ENCODE measurements at regions of chr4 and their contacts with region 1.

Region 1: DNA sequence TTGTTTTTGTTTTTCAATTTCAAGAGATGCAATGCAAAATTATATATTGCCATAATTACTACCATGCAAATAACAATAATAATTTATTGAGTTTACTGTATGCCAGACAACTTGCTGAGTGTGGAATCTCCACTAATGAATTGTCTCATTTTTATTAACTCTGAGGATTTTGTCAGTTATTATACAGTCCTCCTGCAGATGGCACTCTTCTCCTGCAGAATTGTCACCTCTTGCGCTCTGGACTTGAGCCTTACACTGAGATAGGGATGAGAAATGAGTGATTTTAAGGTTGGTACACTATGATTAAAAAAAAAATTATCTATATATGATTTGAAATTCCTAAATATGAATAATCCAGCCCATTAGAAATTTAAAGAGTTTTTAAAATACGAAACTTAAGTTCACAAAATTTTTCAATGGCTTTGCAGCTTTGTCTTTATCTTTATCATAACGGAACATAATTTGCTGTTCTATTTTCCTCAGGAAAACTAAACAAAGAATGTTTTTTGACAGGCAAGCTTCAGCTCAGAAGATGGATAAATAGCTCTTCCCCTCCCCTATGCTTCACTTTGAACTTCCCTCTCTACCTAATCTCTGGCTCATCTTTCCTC is 12.7 kb upstream of the PAQR3 start:
- DNase-seq: peak; percentile 62
- H3K4me3 ChIP-seq: no peak overlapping the region
- H3K27ac ChIP-seq: no peak overlapping the region
- H3K4me1 ChIP-seq: no peaks in the 10 kb centered on the region
- CTCF ChIP-seq: peak; percentile 95

Region 2: DNA sequence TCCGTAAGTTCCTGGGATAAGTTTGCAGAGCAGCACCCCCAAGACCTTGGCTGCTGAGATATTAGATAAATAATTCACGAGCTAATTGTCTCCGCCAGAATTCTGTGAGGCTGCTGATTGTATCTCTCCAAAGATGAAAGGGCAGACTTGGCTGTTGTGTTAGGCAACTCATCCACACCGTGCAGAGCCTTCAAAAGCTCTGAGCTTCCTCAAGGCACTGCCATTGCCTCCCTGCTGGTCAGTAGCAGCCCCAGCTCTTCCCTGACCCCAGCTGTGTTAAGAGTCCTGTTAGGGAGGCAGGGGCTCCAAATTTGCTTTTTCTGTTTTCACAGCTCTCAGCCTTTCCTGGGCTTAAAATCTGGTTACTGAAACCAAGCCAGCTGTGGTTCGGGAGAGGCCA is 497.5 kb before region 1 on chr4:
- CTCF ChIA-PET with region 1: no interaction called
- POLR2A ChIA-PET with region 1: no interaction called
- intact Hi-C with region 1: no loop called
- DNase-seq: no peak
- H3K4me3 ChIP-seq: no peak overlapping the region
- H3K27ac ChIP-seq: no peak overlapping the region
- H3K4me1 ChIP-seq: no peaks in the 10 kb centered on the region
- CTCF ChIP-seq: no peak

Region 3: GRCh38 chr4:80215449-80216052 is 1263.6 kb after region 1 on chr4:
- CTCF ChIA-PET with region 1: no interaction called
- POLR2A ChIA-PET with region 1: no interaction called
- intact Hi-C with region 1: loop called (anchors 5 kb)
- DNase-seq: peak; percentile 40
- H3K4me3 ChIP-seq: no peak overlapping the region
- H3K27ac ChIP-seq: no peak overlapping the region
- H3K4me1 ChIP-seq: no peaks in the 10 kb centered on the region
- CTCF ChIP-seq: peak; percentile 93